ENCODE measurements at regions of chr12 and their contacts with region 1.

Region 1: DNA sequence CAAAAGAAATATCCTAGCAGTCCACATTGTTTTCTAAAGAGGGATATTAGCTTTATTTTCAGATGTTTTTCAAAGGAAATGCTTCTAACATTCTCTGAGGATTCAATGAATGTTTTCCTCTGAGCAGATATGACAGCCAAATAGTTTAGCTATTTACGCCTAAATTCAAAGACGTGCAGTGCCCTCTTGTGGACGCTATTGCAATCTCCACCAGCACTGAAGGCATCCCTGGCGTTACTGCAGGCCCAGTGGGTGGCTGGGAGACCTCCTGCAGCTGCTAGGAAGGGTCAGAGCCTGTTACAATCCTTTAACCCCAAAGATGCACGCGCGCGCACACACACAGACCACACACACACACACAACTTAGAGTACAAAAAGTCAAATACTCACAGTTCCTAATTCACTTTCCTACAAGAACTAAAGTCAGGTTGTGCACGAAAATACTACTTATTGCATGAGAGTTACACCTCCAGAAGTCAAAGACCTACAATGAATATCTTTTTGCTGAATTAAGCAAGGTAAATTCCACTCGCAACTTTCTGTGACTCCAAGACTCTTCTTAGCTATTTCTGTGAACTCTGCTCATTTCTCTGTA is 589.3 kb upstream of the TMEM132C start:
- DNase-seq: peak in 1 of 2 donors; percentile 84
- H3K4me3 ChIP-seq: no peak overlapping the region
- H3K27ac ChIP-seq: peak overlapping the region; percentile 13 to 32
- H3K4me1 ChIP-seq: peaks cover 0 to 9% of the 10 kb centered on the region in 2 donors
- H3K27me3 ChIP-seq: no peaks in the 10 kb centered on the region
- CTCF ChIP-seq: peak; percentile 59 to 80 (median 76)

Region 2: GRCh38 chr12:127108360-127109215 is 569.0 kb before region 1 on chr12:
- intact Hi-C with region 1: loop called (anchors 1 kb)
- DNase-seq: peak in 1 of 2 donors; percentile 66
- H3K4me3 ChIP-seq: no peak overlapping the region
- H3K27ac ChIP-seq: no peak overlapping the region
- H3K4me1 ChIP-seq: no peaks in the 10 kb centered on the region
- H3K27me3 ChIP-seq: no peaks in the 10 kb centered on the region
- CTCF ChIP-seq: peak; percentile 37 to 65 (median 43)

Region 3: GRCh38 chr12:127381048-127381668 is 296.5 kb before region 1 on chr12:
- intact Hi-C with region 1: loop called (anchors 1 kb)
- DNase-seq: peak in 1 of 2 donors; percentile 66
- H3K4me3 ChIP-seq: peak overlapping the region; percentile 37 to 39
- H3K27ac ChIP-seq: no peak overlapping the region
- H3K4me1 ChIP-seq: no peaks in the 10 kb centered on the region
- H3K27me3 ChIP-seq: no peaks in the 10 kb centered on the region
- CTCF ChIP-seq: peak; percentile 65 to 94 (median 76)

Region 4: DNA sequence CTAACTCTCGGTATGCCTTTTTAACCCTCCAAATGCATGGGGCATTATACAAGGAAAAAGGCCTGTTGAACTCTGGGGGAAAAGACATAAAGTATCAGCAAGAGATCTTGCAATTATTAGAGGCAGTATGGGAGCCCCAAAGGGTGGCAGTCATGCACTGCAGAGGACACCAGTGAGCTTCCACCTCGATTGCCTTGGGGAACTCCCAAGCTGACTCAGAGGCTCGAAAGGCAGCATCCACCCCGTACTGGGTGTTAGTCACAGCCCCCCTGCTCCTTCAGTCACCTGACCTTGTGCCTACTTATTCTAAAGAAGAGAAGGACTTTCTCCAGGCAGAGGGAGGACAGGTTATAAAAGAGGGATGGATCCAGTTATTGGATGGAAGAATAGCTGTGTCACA is 192.1 kb before region 1 on chr12:
- intact Hi-C with region 1: loop called (anchors 10 kb)
- DNase-seq: no peak
- H3K4me3 ChIP-seq: no peak overlapping the region
- H3K27ac ChIP-seq: no peak overlapping the region
- H3K4me1 ChIP-seq: no peaks in the 10 kb centered on the region
- H3K27me3 ChIP-seq: no peaks in the 10 kb centered on the region
- CTCF ChIP-seq: no peak

Region 5: GRCh38 chr12:127729381-127729780 is 51.7 kb after region 1 on chr12:
- intact Hi-C with region 1: no loop called
- DNase-seq: no peak
- H3K4me3 ChIP-seq: no peak overlapping the region
- H3K27ac ChIP-seq: no peak overlapping the region
- H3K4me1 ChIP-seq: no peaks in the 10 kb centered on the region
- H3K27me3 ChIP-seq: no peaks in the 10 kb centered on the region
- CTCF ChIP-seq: no peak

Region 6: GRCh38 chr12:127925971-127926370 is 248.3 kb after region 1 on chr12:
- intact Hi-C with region 1: loop called (anchors 2 kb)
- DNase-seq: peak in 1 of 2 donors; percentile 64
- H3K4me3 ChIP-seq: no peak overlapping the region
- H3K27ac ChIP-seq: no peak overlapping the region
- H3K4me1 ChIP-seq: peaks cover 15 to 27% of the 10 kb centered on the region in 2 donors
- H3K27me3 ChIP-seq: no peaks in the 10 kb centered on the region
- CTCF ChIP-seq: peak; percentile 50 to 74 (median 54)